ENCODE measurements at regions of chrX and their contacts with region 1.

Region 1: DNA sequence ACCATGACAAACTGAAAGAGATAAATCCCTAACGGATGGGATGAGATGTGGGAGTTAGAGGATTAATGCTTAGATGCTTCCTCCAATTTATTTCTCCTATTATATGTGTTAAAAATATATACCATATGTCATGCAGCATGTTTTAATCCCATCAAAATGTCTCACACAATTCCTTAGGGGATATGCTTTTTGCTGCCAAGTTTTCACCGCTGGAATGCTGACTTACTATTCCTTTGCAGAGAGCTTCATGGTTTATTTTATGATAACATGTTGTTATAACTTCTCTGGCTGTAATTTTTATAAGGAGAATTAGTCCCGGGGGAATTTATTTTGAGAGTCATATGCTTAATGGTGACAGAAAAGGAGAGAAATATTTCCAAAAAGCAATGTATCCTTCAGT is 670.3 kb downstream of the IL1RAPL1 start:
- DNase-seq: no peak
- ATAC-seq: no peak
- H3K4me3 ChIP-seq: no peak overlapping the region
- H3K27ac ChIP-seq: no peak overlapping the region
- H3K4me1 ChIP-seq: no peaks in the 10 kb centered on the region
- H3K27me3 ChIP-seq: no peaks in the 10 kb centered on the region

Region 2: GRCh38 chrX:28701222-28701621 is 556.3 kb before region 1 on chrX:
- intact Hi-C with region 1: no loop called
- DNase-seq: no peak
- ATAC-seq: no peak
- H3K4me3 ChIP-seq: no peak overlapping the region
- H3K27ac ChIP-seq: no peak overlapping the region
- H3K4me1 ChIP-seq: no peaks in the 10 kb centered on the region
- H3K27me3 ChIP-seq: no peaks in the 10 kb centered on the region

Region 3: GRCh38 chrX:29107231-29107630 is 150.3 kb before region 1 on chrX:
- intact Hi-C with region 1: loop called in 1 of 2 experiments (anchors 5 kb)
- DNase-seq: no peak
- ATAC-seq: no peak
- H3K4me3 ChIP-seq: no peak overlapping the region
- H3K27ac ChIP-seq: no peak overlapping the region
- H3K4me1 ChIP-seq: no peaks in the 10 kb centered on the region
- H3K27me3 ChIP-seq: no peaks in the 10 kb centered on the region

Region 4: GRCh38 chrX:29382811-29383210 is 125.3 kb after region 1 on chrX:
- intact Hi-C with region 1: no loop called
- DNase-seq: no peak
- ATAC-seq: no peak
- H3K4me3 ChIP-seq: no peak overlapping the region
- H3K27ac ChIP-seq: no peak overlapping the region
- H3K4me1 ChIP-seq: no peaks in the 10 kb centered on the region
- H3K27me3 ChIP-seq: no peaks in the 10 kb centered on the region

Region 5: GRCh38 chrX:29461039-29461438 is 203.5 kb after region 1 on chrX:
- intact Hi-C with region 1: no loop called
- DNase-seq: no peak
- ATAC-seq: no peak
- H3K4me3 ChIP-seq: no peak overlapping the region
- H3K27ac ChIP-seq: no peak overlapping the region
- H3K4me1 ChIP-seq: no peaks in the 10 kb centered on the region
- H3K27me3 ChIP-seq: no peaks in the 10 kb centered on the region